Posterior vena cava (tissue), 2 donors: ENCODE measurements at regions of chr1 and their contacts with region 1.

Region 1: GRCh38 chr1:76419603-76420002 is 345.1 kb downstream of the ST6GALNAC3 start:
- DNase-seq: no peak

Region 2: GRCh38 chr1:75736016-75736415 is 683.6 kb before region 1 on chr1:
- intact Hi-C with region 1: loop called in 1 of 2 experiments (anchors 5 kb)
- DNase-seq: no peak